Endothelial cell of umbilical vein (primary cell): ENCODE measurements at regions of chr1 and their contacts with region 1.

Region 1: DNA sequence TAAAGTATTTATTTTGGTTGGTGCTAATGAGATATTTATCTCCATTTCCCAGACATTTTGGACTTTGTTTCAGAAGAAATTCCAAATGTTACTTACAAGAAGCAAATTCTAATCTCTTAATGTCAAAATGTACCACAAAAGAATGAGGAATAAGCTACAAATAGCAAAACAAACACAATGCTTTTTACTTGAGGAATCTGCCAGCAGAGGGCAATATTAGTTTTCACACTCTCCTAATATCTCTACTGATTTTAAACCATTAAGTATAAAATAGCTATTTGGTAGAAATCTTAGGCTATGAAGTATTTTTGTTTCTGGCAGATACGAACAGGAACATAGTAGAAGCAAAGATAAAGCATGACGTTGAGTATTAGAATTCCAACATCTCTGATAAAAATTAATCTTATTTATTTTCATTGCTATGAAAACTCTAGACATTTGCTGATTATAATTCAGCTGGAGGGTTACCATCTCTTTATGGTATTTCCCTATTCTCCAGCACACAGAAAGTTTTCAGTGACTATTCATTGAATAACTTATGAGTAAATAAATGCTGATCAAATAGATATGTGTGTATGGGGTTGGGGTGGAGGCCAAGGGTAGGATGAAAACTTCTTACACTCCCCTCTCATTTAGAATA is 13.4 kb upstream of the HMCN1 start:
- DNase-seq: peak; percentile 76
- H3K4me3 ChIP-seq: no peak overlapping the region
- H3K27ac ChIP-seq: no peak overlapping the region
- H3K4me1 ChIP-seq: peaks cover 3% of the 10 kb centered on the region
- H3K27me3 ChIP-seq: no peaks in the 10 kb centered on the region
- CTCF ChIP-seq: peak; percentile 31 to 32
- POLR2A ChIP-seq: no peak

Region 2: GRCh38 chr1:185733818-185734771 is 13.3 kb after region 1 on chr1 and contains the start of gene HMCN1:
- CTCF ChIA-PET with region 1: interaction called, 62 read pairs
- POLR2A ChIA-PET with region 1: no interaction called
- dilution Hi-C with region 1: no loop called
- intact Hi-C with region 1: no loop called
- DNase-seq: peak; percentile 85
- H3K4me3 ChIP-seq: peak within 1 kb of the TSS; percentile 52 to 80 (median 74)
- H3K27ac ChIP-seq: peak within 1 kb of the TSS; percentile 50
- H3K4me1 ChIP-seq: peaks cover 19% of the 10 kb centered on the region
- H3K27me3 ChIP-seq: no peaks in the 10 kb centered on the region
- CTCF ChIP-seq: peak; percentile 42 to 51
- POLR2A ChIP-seq: no peak
- total RNA-seq, gene HMCN1: 5.6 and 10.3 TPM in 2 replicates

Region 3: GRCh38 chr1:185864889-185865288 is 144.1 kb after region 1 on chr1:
- CTCF ChIA-PET with region 1: interaction called, 11 read pairs
- POLR2A ChIA-PET with region 1: no interaction called
- dilution Hi-C with region 1: no loop called
- intact Hi-C with region 1: no loop called
- DNase-seq: peak; percentile 74
- H3K4me3 ChIP-seq: no peak overlapping the region
- H3K27ac ChIP-seq: peak overlapping the region; percentile 63
- H3K4me1 ChIP-seq: peaks cover 36% of the 10 kb centered on the region
- H3K27me3 ChIP-seq: no peaks in the 10 kb centered on the region
- CTCF ChIP-seq: no peak
- POLR2A ChIP-seq: no peak

Region 4: GRCh38 chr1:185907246-185907645 is 186.5 kb after region 1 on chr1:
- CTCF ChIA-PET with region 1: no interaction called
- POLR2A ChIA-PET with region 1: no interaction called
- dilution Hi-C with region 1: no loop called
- intact Hi-C with region 1: no loop called
- DNase-seq: no peak
- H3K4me3 ChIP-seq: no peak overlapping the region
- H3K27ac ChIP-seq: no peak overlapping the region
- H3K4me1 ChIP-seq: no peaks in the 10 kb centered on the region
- H3K27me3 ChIP-seq: no peaks in the 10 kb centered on the region
- CTCF ChIP-seq: no peak
- POLR2A ChIP-seq: no peak

Region 5: DNA sequence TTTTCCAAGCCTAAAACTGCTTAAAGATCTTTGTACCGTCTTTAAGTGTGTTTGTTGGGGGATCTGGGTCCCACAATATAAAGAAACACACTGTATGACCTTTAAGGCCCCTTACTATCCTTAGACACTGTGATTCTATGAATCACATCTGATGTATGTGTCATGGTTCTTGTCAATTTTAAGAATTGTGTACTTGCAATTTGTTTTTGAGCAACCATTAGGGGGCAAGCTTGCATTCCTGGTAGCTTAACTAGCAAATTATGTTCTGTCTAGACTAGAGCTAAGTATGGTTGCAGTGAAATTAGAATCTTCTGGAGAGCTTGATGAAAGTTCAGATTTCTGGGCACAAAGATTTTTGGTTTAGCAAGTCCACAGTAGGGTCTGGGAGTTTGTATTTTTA is 434.8 kb after region 1 on chr1:
- CTCF ChIA-PET with region 1: interaction called, 34 read pairs
- POLR2A ChIA-PET with region 1: no interaction called
- dilution Hi-C with region 1: no loop called
- intact Hi-C with region 1: loop called (anchors 1 kb)
- DNase-seq: peak; percentile 60
- H3K4me3 ChIP-seq: no peak overlapping the region
- H3K27ac ChIP-seq: no peak overlapping the region
- H3K4me1 ChIP-seq: no peaks in the 10 kb centered on the region
- H3K27me3 ChIP-seq: no peaks in the 10 kb centered on the region
- CTCF ChIP-seq: peak; percentile 41 to 45
- POLR2A ChIP-seq: no peak

Region 6: GRCh38 chr1:186212544-186213226 is 491.9 kb after region 1 on chr1:
- CTCF ChIA-PET with region 1: interaction called, 133 read pairs
- POLR2A ChIA-PET with region 1: interaction called, 3 read pairs
- dilution Hi-C with region 1: no loop called
- intact Hi-C with region 1: loop called (anchors 1 kb)
- DNase-seq: peak; percentile 88
- H3K4me3 ChIP-seq: no peak overlapping the region
- H3K27ac ChIP-seq: no peak overlapping the region
- H3K4me1 ChIP-seq: peaks cover 4% of the 10 kb centered on the region
- H3K27me3 ChIP-seq: no peaks in the 10 kb centered on the region
- CTCF ChIP-seq: peak; percentile 73 to 77
- POLR2A ChIP-seq: no peak